Esophagus muscularis mucosa (tissue), 4 donors: ENCODE measurements at regions of chr1 and their contacts with region 1.

Region 1: GRCh38 chr1:206106328-206107167 is 10.6 kb downstream of the AVPR1B start:
- DNase-seq: no peak
- H3K4me3 ChIP-seq: no peak overlapping the region
- H3K27ac ChIP-seq: no peak overlapping the region
- H3K4me1 ChIP-seq: peaks cover 0 to 5% (median 2%) of the 10 kb centered on the region in 4 donors
- H3K27me3 ChIP-seq: peaks cover 0 to 6% (median 0%) of the 10 kb centered on the region in 4 donors
- CTCF ChIP-seq: peak; percentile 78 to 82 (median 81)
- EP300 ChIP-seq: no peak
- POLR2A ChIP-seq: no peak

Region 2: DNA sequence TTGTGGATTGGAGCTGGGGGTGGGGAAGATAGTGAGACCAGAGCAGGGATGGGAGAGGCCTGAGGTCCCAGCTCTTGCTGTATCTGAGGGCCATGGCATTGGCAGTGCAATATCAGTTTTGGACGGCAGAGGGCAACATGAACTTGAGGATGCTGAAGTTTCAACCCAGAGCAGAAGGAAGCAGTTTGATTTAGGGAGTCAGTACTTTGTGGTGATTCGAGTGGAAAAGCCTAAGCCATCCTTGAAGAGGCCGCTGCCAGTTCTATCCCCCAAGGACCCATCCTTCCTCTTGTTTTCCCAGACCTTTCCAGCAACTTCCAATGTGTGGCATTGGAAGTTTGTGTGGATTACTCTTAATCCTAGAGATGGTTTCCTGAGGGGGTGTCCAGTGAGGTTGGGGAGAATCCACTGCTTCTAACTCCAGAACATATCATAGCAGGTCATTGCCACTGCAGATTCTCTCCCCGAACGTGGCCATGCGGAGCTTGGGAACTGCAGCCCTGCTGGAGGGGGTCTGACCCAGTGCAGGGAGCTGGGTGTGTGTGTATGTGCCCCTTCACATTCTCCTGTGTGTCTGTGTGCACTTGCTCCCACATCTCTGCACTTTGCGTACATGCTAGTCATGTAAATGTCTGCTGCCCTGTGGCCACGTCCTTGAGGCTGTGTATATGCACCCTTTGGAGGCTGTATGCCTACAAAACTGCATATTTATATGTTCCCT is 187.4 kb before region 1 on chr1:
- intact Hi-C with region 1: loop called (anchors 5 kb)
- DNase-seq: peak; percentile 95
- H3K4me3 ChIP-seq: no peak overlapping the region
- H3K27ac ChIP-seq: no peak overlapping the region
- H3K4me1 ChIP-seq: peaks cover 5 to 27% (median 17%) of the 10 kb centered on the region in 4 donors
- H3K27me3 ChIP-seq: peaks cover 0 to 14% (median 0%) of the 10 kb centered on the region in 4 donors
- CTCF ChIP-seq: peak; percentile 86 to 97 (median 92)
- EP300 ChIP-seq: no peak
- POLR2A ChIP-seq: no peak

Region 3: DNA sequence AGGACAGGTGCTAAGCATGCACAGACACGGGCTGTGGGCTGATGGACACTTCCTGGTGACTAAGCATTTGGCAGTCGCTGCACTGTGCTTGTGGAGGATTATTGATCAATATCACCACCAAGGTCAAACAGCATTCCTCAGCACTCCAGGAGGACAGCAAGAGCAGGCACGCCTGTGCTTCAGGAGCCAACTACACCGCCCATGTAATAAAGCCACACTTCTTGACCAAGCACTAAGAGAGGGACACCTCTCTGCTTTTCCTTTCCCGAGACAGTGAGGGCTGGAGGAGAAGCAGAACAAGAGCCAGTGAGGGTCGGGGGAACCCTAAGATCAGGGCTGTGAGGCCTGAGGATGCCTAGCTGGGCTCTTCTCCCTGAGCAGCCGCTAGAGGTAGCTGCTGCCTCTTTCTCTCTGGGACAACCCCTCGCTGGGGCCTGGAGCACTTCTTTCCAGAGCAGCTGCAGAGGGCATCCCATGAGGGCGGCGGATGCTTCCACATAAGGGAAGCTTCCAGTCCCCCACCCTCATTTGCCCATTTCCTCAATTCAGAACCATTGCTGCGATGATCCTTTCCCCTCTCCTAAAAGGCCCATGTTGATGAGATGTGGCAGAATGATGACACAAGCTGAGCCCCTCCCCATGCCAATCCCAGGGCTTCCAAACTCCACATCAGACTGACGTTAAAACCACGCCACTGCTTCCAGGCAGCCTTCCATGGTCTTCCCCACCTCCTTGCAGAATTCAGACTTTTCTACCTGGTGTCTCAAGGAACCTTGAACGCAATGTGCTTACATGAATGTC is 122.4 kb before region 1 on chr1:
- intact Hi-C with region 1: loop called (anchors 5 kb)
- DNase-seq: no peak
- H3K4me3 ChIP-seq: no peak overlapping the region
- H3K27ac ChIP-seq: no peak overlapping the region
- H3K4me1 ChIP-seq: peaks cover 3 to 25% (median 16%) of the 10 kb centered on the region in 4 donors
- H3K27me3 ChIP-seq: no peaks in the 10 kb centered on the region
- CTCF ChIP-seq: peak; percentile 42 to 63 (median 56)
- EP300 ChIP-seq: no peak
- POLR2A ChIP-seq: no peak

Region 4: DNA sequence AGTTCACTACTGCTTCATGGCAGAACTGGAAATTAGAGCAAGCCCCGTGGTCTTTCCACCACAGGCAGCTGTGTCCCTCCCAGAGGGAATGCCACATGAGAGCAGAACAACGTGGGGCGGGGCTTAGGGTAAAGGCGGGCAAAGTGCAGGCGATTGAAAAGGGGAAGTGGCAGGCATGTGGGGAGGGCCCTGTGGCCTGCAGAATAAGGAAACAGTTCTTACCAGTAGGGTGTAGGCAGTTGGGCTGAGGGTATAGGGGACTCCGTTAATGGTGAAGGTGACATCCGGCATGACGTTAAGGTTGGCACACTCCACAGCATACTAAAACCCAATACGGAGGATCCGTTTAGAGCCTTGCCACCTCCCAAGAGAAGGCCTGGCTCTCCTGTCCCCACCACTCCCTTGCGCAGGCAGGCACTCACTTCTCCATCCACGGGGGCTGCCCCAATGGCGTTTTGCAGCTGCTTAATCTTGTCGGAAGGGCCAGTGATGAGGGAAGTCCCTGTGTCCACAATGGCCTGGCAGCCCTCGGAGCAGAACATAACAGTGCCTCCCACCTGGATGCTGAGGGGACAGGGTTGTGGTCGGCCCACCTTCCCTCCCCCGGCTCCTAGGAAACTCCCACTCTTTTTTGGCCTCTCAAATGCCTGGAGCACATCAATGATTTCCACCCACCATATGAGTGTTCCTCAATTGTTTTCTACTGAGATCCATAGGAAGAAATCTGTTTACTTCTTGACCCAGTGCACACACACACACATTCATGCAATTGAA is 94.3 kb before region 1 on chr1:
- intact Hi-C with region 1: no loop called
- DNase-seq: no peak
- H3K4me3 ChIP-seq: no peak overlapping the region
- H3K27ac ChIP-seq: no peak overlapping the region
- H3K4me1 ChIP-seq: no peaks in the 10 kb centered on the region
- H3K27me3 ChIP-seq: no peaks in the 10 kb centered on the region
- CTCF ChIP-seq: no peak
- EP300 ChIP-seq: no peak
- POLR2A ChIP-seq: no peak

Region 5: DNA sequence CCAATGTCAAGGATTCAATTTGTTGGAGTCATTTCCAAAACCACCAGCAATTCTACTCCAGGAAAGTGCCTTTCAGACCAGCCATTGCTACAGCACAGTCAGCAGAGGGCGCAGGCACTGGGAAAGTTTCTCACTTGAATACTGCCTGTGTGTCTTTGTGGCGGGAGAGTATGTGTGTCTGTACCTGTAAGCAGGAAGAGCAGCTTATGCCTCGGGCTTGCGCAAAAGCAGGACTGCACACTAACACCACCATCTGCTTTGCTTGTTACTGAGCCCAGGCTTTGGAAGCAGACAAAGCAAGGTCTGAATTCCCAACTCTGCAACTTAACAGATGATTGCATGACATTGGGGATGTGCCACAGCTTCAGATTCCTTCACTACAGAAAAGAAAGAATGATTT is 75.8 kb before region 1 on chr1:
- intact Hi-C with region 1: loop called (anchors 5 kb)
- DNase-seq: no peak
- H3K4me3 ChIP-seq: no peak overlapping the region
- H3K27ac ChIP-seq: no peak overlapping the region
- H3K4me1 ChIP-seq: no peaks in the 10 kb centered on the region
- H3K27me3 ChIP-seq: peaks cover 0 to 24% (median 0%) of the 10 kb centered on the region in 4 donors
- CTCF ChIP-seq: peak; percentile 55 to 71 (median 63)
- EP300 ChIP-seq: no peak
- POLR2A ChIP-seq: no peak

Region 6: DNA sequence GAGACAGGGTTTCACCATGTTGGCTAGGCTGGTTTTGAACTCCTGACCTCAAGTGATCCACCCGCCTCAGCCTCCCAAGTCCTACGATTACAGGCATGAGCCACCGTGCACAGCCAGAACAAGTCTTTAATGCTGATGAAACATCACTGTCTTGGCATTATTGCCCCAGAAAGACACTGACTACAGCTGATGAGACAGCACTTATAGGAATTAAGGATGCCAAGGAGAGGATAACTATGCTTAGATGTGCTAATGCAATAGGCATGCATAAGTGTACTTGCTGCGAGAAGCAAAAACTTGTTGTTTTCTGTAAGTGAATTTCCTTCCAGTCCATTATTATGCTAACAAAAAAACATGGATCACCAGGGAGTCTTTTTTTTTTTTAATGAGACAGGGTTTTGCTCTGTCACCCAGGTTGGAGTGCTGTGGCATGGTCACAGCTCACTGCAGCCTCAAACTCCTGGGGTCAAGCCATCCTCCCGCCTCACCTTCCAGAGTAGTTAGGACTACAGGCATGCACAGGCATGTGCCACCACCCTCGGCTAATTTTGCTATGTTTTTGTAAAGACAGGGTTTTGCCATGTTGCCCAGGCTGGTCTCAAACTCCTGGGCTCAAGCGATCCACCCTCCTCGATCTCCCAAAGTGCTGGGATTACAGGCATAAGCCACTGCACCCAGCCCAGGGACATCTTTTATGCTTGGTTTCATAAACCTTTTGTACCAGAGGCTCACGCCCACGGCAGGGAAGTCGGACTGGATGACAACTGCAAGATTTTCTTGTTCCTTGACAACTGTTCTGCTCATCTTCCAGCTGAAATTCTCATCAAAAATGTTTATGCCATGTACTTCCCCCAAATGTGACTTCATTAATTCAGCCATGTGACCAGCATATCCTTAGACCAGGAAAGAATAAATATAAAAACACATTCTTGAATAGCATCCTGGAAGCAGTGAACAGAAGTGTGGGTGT is 30.5 kb before region 1 on chr1:
- intact Hi-C with region 1: no loop called
- DNase-seq: no peak
- H3K4me3 ChIP-seq: no peak overlapping the region
- H3K27ac ChIP-seq: no peak overlapping the region
- H3K4me1 ChIP-seq: no peaks in the 10 kb centered on the region
- H3K27me3 ChIP-seq: peaks cover 0 to 13% (median 0%) of the 10 kb centered on the region in 4 donors
- CTCF ChIP-seq: no peak
- EP300 ChIP-seq: no peak
- POLR2A ChIP-seq: no peak

Region 7: DNA sequence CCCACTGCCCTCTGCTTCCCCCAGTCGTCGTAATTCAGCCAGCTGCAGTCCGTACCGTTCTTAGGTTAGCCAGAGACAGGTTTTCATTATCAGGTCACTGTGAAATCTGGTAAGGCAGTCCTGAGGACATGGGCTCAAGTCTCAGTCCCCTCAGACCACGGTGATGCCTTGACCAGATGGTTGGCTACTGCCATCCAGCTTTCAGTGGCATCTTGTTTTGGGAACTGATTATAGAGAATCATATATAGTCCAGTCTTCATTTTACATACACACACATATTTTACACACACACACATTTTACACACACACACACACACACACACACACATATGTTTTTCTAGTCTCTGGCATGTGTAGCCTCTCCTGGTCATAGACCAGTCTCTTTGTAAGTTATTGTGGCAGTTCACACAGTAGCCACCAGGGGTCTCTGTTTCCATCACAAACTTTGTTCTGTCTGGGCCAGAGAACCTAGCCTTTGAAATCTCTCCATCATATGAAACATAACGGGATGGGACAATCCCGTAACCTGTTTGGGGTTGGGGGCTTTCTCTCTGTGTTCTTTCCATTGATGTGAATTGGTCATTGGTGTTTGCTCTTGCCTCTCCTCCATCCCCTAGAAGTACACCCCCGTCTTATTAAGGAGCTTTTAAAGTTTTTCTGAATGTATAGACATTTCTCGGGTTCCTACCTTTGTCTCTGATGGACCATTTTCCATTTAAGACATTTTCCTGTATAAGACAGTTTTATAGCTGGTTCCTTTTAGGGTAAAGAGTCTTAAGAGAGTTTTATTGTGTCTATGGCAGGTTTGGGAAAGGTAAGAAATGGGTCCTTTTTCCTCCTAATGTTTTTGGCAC is 355.3 kb after region 1 on chr1:
- intact Hi-C with region 1: no loop called
- DNase-seq: no peak
- H3K4me3 ChIP-seq: no peak overlapping the region
- H3K27ac ChIP-seq: peak overlapping the region in 1 of 4 donors; percentile 66
- H3K4me1 ChIP-seq: peaks cover 12 to 27% (median 19%) of the 10 kb centered on the region in 4 donors
- H3K27me3 ChIP-seq: peaks cover 0 to 3% (median 0%) of the 10 kb centered on the region in 4 donors
- CTCF ChIP-seq: peak; percentile 74 to 88 (median 87)
- EP300 ChIP-seq: no peak
- POLR2A ChIP-seq: no peak

Region 8: GRCh38 chr1:206761159-206761768 is 654.7 kb after region 1 on chr1:
- intact Hi-C with region 1: no loop called
- DNase-seq: no peak
- H3K4me3 ChIP-seq: no peak overlapping the region
- H3K27ac ChIP-seq: no peak overlapping the region
- H3K4me1 ChIP-seq: no peaks in the 10 kb centered on the region
- H3K27me3 ChIP-seq: no peaks in the 10 kb centered on the region
- CTCF ChIP-seq: no peak
- EP300 ChIP-seq: no peak
- POLR2A ChIP-seq: no peak